BJ (cell line): ENCODE measurements at regions of chr6 and their contacts with region 1.

Region 1: DNA sequence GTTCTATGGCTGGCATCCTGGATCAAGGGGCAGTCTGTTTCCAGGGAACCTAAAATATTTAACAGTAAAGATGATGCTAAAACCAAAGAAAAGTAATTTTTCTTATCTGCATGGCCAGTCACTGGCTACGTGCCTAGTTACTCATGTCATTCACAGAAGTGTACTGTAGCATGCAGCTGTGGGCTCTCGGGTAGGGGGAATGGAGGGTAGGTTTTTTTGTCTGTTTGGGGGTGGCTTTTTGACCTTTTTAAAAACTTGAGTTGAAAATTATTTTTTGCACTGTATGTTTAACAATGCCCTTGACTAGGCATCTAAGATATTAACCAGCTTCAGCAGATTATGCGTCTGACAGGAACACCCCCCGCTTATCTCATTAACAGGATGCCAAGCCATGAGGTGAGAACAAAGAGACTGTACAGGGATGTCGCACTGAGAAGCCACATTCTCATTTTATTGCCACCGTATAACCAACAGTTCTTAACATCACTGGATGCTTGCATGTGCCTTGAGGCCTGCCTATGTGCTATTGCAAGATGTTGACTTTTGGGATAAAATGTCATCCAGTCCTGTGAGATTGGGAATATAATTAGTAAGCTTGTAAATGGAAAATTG is 30.3 kb upstream of the MAPK13 start:
- DNase-seq: no peak
- H3K4me3 ChIP-seq: no peak overlapping the region
- H3K27me3 ChIP-seq: no peaks in the 10 kb centered on the region
- CTCF ChIP-seq: no peak

Region 2: DNA sequence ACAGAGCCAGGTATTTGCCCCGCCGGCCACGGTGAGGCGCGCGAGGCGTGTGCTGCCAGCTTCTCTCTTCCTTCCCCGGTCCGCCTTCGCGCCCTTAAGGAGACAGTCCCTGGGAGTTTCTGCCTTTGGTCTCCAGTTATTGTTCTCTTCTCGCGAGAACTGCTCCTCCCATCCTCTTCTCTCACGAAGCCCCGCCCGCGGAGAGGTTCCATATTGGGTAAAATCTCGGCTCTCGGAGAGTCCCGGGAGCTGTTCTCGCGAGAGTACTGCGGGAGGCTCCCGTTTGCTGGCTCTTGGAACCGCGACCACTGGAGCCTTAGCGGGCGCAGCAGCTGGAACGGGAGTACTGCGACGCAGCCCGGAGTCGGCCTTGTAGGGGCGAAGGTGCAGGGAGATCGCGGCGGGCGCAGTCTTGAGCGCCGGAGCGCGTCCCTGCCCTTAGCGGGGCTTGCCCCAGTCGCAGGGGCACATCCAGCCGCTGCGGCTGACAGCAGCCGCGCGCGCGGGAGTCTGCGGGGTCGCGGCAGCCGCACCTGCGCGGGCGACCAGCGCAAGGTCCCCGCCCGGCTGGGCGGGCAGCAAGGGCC is 72.4 kb before region 1 on chr6 and contains the start of gene MAPK14:
- CTCF ChIA-PET with region 1: interaction called, 117 read pairs
- POLR2A ChIA-PET with region 1: no interaction called
- DNase-seq: peak; percentile 96
- H3K4me3 ChIP-seq: peak within 1 kb of the TSS; percentile 91
- H3K27me3 ChIP-seq: no peaks in the 10 kb centered on the region
- CTCF ChIP-seq: peak; percentile 89
- polyA plus RNA-seq, gene MAPK14: 33.9 and 53.0 TPM in 2 replicates